Heart left ventricle (tissue), 16 donors: ENCODE measurements at regions of chr14 and their contacts with region 1.

Region 1: GRCh38 chr14:69726761-69727511 is 40.0 kb upstream of the SRSF5 start:
- DNase-seq: peak; percentile 82 to 94 (median 86)
- ATAC-seq: peak; percentile 93 to 97 (median 96)
- H3K4me3 ChIP-seq: peak overlapping the region in 11 of 12 donors; percentile 27 to 61 (median 51)
- H3K27ac ChIP-seq: peak overlapping the region in 11 of 12 donors; percentile 56 to 79 (median 69)
- H3K4me1 ChIP-seq: peaks cover 0 to 39% (median 7%) of the 10 kb centered on the region in 12 donors
- H3K27me3 ChIP-seq: no peaks in the 10 kb centered on the region
- CTCF ChIP-seq: peak; percentile 95 to 100 (median 99)
- POLR2A ChIP-seq: no peak

Region 2: DNA sequence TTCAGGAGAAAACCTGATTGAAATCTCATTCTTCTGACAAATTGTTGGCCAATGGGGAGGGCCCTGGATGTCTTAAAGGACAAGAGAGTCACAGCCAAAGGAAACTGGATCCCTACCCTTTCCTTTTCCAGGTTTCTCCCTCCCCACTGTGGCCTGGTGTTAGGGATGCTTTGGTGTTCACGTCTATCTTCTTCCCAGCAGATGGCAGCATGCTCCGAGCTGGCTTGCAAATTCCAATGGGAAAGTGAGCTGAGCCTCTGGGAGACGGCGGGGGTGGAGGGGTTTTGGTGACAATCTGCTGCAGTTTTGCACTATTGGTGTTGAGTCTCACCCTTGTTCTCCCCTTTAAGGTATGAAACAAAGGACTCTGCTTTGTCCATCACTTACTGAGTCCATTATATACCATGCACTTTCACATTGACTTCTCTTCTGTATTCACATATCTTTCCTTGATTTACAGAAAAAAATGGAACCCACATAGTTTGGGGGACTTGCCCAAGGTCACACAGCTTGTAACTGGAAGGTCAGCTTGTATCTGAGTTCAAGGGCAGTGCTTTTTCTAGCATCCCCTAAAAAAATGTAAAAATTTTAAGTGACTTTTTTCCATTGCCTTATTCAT is 191.6 kb before region 1 on chr14:
- intact Hi-C with region 1: loop called in 1 of 10 experiments (anchors 2 kb)
- DNase-seq: peak in 2 of 5 donors; percentile 25 to 40
- ATAC-seq: peak in 2 of 4 donors; percentile 38 to 57
- H3K4me3 ChIP-seq: no peak overlapping the region
- H3K27ac ChIP-seq: no peak overlapping the region
- H3K4me1 ChIP-seq: peaks cover 0 to 5% (median 0%) of the 10 kb centered on the region in 12 donors
- H3K27me3 ChIP-seq: peaks cover 0 to 16% (median 0%) of the 10 kb centered on the region in 9 donors
- CTCF ChIP-seq: peak; percentile 17 to 70 (median 48)
- POLR2A ChIP-seq: no peak

Region 3: GRCh38 chr14:69586404-69586803 is 140.5 kb before region 1 on chr14:
- intact Hi-C with region 1: loop called (anchors 1 to 5 kb)
- DNase-seq: no peak
- ATAC-seq: peak in 1 of 4 donors; percentile 52
- H3K4me3 ChIP-seq: no peak overlapping the region
- H3K27ac ChIP-seq: peak overlapping the region in 2 of 12 donors; percentile 16 to 62
- H3K4me1 ChIP-seq: peaks cover 0 to 31% (median 6%) of the 10 kb centered on the region in 12 donors
- H3K27me3 ChIP-seq: no peaks in the 10 kb centered on the region
- CTCF ChIP-seq: no peak
- POLR2A ChIP-seq: no peak

Region 4: GRCh38 chr14:69605738-69606137 is 121.2 kb before region 1 on chr14:
- intact Hi-C with region 1: loop called in 9 of 10 experiments (anchors 1 to 5 kb)
- DNase-seq: no peak
- ATAC-seq: no peak
- H3K4me3 ChIP-seq: no peak overlapping the region
- H3K27ac ChIP-seq: no peak overlapping the region
- H3K4me1 ChIP-seq: peaks cover 0 to 16% (median 9%) of the 10 kb centered on the region in 12 donors
- H3K27me3 ChIP-seq: no peaks in the 10 kb centered on the region
- CTCF ChIP-seq: no peak
- POLR2A ChIP-seq: no peak

Region 5: GRCh38 chr14:69657950-69658355 is 69.0 kb before region 1 on chr14:
- intact Hi-C with region 1: no loop called
- DNase-seq: peak in 1 of 5 donors; percentile 38
- ATAC-seq: peak in 3 of 4 donors; percentile 31 to 49 (median 42)
- H3K4me3 ChIP-seq: no peak overlapping the region
- H3K27ac ChIP-seq: peak overlapping the region in 11 of 12 donors; percentile 21 to 70 (median 54)
- H3K4me1 ChIP-seq: peaks cover 15 to 95% (median 75%) of the 10 kb centered on the region in 12 donors
- H3K27me3 ChIP-seq: no peaks in the 10 kb centered on the region
- CTCF ChIP-seq: no peak
- POLR2A ChIP-seq: no peak

Region 6: GRCh38 chr14:69673578-69674305 is 53.2 kb before region 1 on chr14:
- intact Hi-C with region 1: loop called in 1 of 10 experiments (anchors 5 kb)
- DNase-seq: peak in 1 of 5 donors; percentile 31
- ATAC-seq: peak in 2 of 4 donors; percentile 21 to 32
- H3K4me3 ChIP-seq: peak overlapping the region in 5 of 12 donors; percentile 1 to 34 (median 19)
- H3K27ac ChIP-seq: peak overlapping the region; percentile 1 to 79 (median 56)
- H3K4me1 ChIP-seq: peaks cover 33 to 85% (median 72%) of the 10 kb centered on the region in 12 donors
- H3K27me3 ChIP-seq: no peaks in the 10 kb centered on the region
- CTCF ChIP-seq: no peak
- POLR2A ChIP-seq: no peak

Region 7: GRCh38 chr14:69755784-69756183 is 28.8 kb after region 1 on chr14:
- intact Hi-C with region 1: no loop called
- DNase-seq: no peak
- ATAC-seq: no peak
- H3K4me3 ChIP-seq: no peak overlapping the region
- H3K27ac ChIP-seq: no peak overlapping the region
- H3K4me1 ChIP-seq: peaks cover 0 to 4% (median 0%) of the 10 kb centered on the region in 12 donors
- H3K27me3 ChIP-seq: no peaks in the 10 kb centered on the region
- CTCF ChIP-seq: no peak
- POLR2A ChIP-seq: no peak

Region 8: DNA sequence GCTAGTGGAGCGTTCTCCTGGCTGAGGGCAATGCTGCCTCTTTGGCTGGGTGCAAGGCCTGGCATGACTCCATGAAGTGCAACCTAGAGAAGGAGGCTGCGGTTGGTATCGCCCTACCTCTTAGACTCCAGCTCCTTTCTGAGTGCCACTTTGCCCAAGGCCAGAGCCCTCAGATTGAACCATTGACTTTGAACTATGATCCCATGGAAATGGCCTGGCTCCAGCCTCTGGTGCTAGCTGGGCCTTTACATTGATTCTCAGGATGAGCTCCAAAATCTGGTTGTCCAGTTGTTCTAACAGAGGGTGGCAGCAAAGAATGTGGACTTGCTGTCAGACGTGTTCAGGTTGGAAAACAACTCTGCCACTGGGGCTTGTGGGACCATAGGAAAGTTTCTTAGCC is 136.1 kb after region 1 on chr14:
- intact Hi-C with region 1: no loop called
- DNase-seq: no peak
- ATAC-seq: no peak
- H3K4me3 ChIP-seq: no peak overlapping the region
- H3K27ac ChIP-seq: no peak overlapping the region
- H3K4me1 ChIP-seq: no peaks in the 10 kb centered on the region
- H3K27me3 ChIP-seq: peaks cover 0 to 22% (median 0%) of the 10 kb centered on the region in 9 donors
- CTCF ChIP-seq: no peak
- POLR2A ChIP-seq: no peak